Naive thymus-derived CD4-positive, alpha-beta T cell (primary cell): ENCODE measurements at regions of chr9 and their contacts with region 1.

Region 1: DNA sequence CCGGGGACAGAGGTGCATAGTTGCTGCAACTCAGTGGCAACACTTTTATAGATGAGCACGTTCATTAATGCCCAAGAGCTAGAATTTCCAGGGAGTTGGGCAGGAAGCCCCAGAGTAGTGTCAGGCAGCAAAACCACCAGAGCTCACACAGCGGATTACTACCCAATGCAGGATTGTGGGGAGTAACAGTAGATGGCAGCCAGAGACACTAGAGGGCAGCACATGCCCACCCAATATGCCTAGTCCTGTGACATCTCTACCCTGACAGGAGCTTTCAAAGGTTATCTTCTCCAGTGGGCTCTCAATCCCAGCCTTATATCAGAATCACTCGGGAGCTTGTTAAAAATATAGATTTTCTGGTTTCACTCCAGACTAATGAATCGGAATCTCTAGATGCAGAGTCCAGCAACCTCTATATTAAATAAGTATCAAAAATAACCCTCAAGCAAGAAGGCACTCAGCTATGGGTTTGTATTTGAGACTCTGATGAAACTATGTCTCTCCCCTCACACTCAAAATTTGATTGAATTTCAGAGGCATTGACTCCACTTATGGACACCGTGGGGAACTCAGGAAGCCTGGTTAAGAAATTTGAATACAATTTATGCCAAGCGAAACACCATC is 58.4 kb upstream of the PHF24 start:
- DNase-seq: peak; percentile 59 to 84 (median 77)
- ATAC-seq: peak; percentile 100
- H3K4me3 ChIP-seq: no peak overlapping the region
- H3K4me3 Mint-ChIP-seq: no peak overlapping the region
- H3K27ac ChIP-seq: no peak overlapping the region
- H3K27ac Mint-ChIP-seq: no peak overlapping the region
- H3K4me1 ChIP-seq: no peaks in the 10 kb centered on the region
- H3K4me1 Mint-ChIP-seq: no peaks in the 10 kb centered on the region
- H3K27me3 ChIP-seq: no peaks in the 10 kb centered on the region
- H3K27me3 Mint-ChIP-seq: peaks cover 27 to 59% (median 36%) of the 10 kb centered on the region in 5 donors

Region 2: DNA sequence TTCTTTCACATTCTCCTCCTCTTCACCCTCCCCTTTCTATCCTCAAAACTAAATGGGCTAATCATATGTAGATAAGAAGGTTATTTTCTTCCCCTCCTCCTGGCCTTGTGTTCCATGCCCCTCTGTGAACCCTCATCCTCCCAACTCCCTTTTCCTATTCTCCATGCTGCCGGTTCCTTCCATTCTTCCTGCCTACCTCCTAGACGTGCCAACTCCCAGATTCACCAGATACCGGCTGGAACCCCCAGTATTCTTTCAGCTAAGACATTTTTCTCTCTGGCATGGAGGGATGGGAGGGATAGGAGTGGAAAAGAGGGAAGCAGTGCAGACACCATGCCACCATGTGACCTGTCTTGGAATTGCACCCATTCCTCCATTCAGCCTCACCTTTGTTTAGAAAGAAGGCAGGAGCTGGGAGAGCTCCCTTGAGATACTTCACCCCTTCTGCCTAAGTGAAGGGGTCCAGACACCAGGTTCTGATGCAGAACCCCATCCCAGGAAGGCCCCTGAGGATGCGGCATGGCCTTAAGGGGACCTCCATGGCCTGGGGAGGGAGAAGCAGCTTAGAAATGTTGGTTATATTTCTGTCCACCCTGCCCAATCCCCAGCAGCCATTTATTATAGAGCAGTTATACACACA is 94.7 kb after region 1 on chr9:
- CTCF ChIA-PET with region 1: interaction called, 11 read pairs
- POLR2A ChIA-PET with region 1: interaction called, 3 read pairs
- intact Hi-C with region 1: loop called (anchors 1 kb)
- DNase-seq: no peak
- ATAC-seq: no peak
- H3K4me3 ChIP-seq: no peak overlapping the region
- H3K4me3 Mint-ChIP-seq: no peak overlapping the region
- H3K27ac ChIP-seq: no peak overlapping the region
- H3K27ac Mint-ChIP-seq: peak overlapping the region in 1 of 9 donors; percentile 85
- H3K4me1 ChIP-seq: peaks cover 2 to 4% of the 10 kb centered on the region in 2 donors
- H3K4me1 Mint-ChIP-seq: peaks cover 0 to 18% (median 8%) of the 10 kb centered on the region in 7 donors
- H3K27me3 ChIP-seq: no peaks in the 10 kb centered on the region
- H3K27me3 Mint-ChIP-seq: no peaks in the 10 kb centered on the region

Region 3: DNA sequence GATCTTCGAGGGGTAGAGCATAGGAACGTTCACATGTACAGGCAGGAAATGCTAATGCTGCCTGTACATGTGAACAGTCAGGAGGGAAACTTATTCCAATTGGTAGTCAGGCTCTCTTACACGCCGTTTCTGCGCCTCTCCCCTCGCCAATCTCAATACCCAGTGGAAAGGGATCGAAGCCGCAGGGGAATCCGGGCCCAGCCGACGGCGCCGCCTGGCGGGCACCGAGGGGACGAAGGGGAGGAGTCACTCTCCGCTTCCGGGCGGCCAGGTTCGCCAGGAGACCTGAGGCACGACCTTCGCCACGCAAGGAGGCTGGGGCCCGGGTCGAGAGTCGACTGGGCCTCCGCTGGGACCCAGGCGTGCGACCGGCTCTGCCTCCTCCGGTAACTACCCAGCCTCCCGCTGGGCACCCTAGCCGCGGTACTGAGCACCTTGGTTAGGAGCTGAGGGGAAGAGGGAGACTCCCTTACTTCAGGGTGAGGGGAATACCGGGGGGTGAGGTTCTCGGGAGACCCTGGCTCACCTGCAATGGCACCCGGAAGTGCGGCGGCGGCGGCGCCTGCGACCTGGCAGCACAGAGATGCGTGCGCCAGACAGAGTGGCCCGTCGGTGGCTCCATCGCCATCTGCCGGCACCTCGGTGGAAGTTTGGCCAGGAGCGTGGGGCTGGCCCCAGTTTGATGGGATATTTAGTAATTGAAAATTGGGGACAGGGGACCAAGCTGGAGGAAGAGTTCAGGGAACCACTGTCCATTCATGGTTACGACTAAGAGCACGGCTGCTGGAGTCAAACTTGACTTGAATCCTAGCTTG is 196.6 kb after region 1 on chr9 and contains the start of gene PIGO:
- CTCF ChIA-PET with region 1: interaction called, 18 read pairs
- POLR2A ChIA-PET with region 1: interaction called, 3 read pairs
- intact Hi-C with region 1: loop called (anchors 1 kb)
- DNase-seq: peak; percentile 85 to 94 (median 92)
- ATAC-seq: peak; percentile 96
- H3K4me3 ChIP-seq: peak within 1 kb of the TSS; percentile 97
- H3K4me3 Mint-ChIP-seq: peak within 1 kb of the TSS; percentile 81 to 90 (median 86)
- H3K27ac ChIP-seq: peak within 1 kb of the TSS; percentile 99
- H3K27ac Mint-ChIP-seq: peak within 1 kb of the TSS; percentile 77 to 96 (median 94)
- H3K4me1 ChIP-seq: peaks cover 8 to 11% of the 10 kb centered on the region in 2 donors
- H3K4me1 Mint-ChIP-seq: peaks cover 25 to 50% (median 38%) of the 10 kb centered on the region in 7 donors
- H3K27me3 ChIP-seq: no peaks in the 10 kb centered on the region
- H3K27me3 Mint-ChIP-seq: no peaks in the 10 kb centered on the region
- total RNA-seq, gene PIGO: 27.1 to 36.0 (median 29.9) TPM

Region 4: GRCh38 chr9:35481347-35481975 is 581.8 kb after region 1 on chr9:
- CTCF ChIA-PET with region 1: interaction called, 3 read pairs
- POLR2A ChIA-PET with region 1: no interaction called
- intact Hi-C with region 1: loop called in 1 of 2 experiments (anchors 1 kb)
- DNase-seq: peak in 3 of 9 donors; percentile 14 to 38 (median 19)
- ATAC-seq: peak; percentile 68
- H3K4me3 ChIP-seq: no peak overlapping the region
- H3K4me3 Mint-ChIP-seq: no peak overlapping the region
- H3K27ac ChIP-seq: no peak overlapping the region
- H3K27ac Mint-ChIP-seq: no peak overlapping the region
- H3K4me1 ChIP-seq: no peaks in the 10 kb centered on the region
- H3K4me1 Mint-ChIP-seq: no peaks in the 10 kb centered on the region
- H3K27me3 ChIP-seq: peaks cover 0 to 4% of the 10 kb centered on the region in 2 donors
- H3K27me3 Mint-ChIP-seq: peaks cover 0 to 15% (median 8%) of the 10 kb centered on the region in 5 donors